MCF 10A (cell line): ENCODE measurements at regions of chr20 and their contacts with region 1.

Region 1: GRCh38 chr20:5529331-5530148 is 212.8 kb upstream of the PROKR2 start:
- DNase-seq: peak; percentile 85
- H3K4me3 Mint-ChIP-seq: no peak overlapping the region
- H3K27ac Mint-ChIP-seq: peak overlapping the region; percentile 23
- H3K4me1 Mint-ChIP-seq: peaks cover 34% of the 10 kb centered on the region
- H3K27me3 Mint-ChIP-seq: peaks cover 12% of the 10 kb centered on the region
- CTCF ChIP-seq: peak; percentile 71

Region 2: GRCh38 chr20:5543385-5543784 is 13.8 kb after region 1 on chr20:
- CTCF ChIA-PET with region 1: interaction called, 51 read pairs
- POLR2A ChIA-PET with region 1: interaction called, 8 read pairs
- intact Hi-C with region 1: no loop called
- DNase-seq: no peak
- H3K4me3 Mint-ChIP-seq: no peak overlapping the region
- H3K27ac Mint-ChIP-seq: no peak overlapping the region
- H3K4me1 Mint-ChIP-seq: no peaks in the 10 kb centered on the region
- H3K27me3 Mint-ChIP-seq: no peaks in the 10 kb centered on the region
- CTCF ChIP-seq: no peak

Region 3: GRCh38 chr20:5557123-5557522 is 27.6 kb after region 1 on chr20:
- CTCF ChIA-PET with region 1: interaction called, 28 read pairs
- POLR2A ChIA-PET with region 1: interaction called, 13 read pairs
- intact Hi-C with region 1: loop called (anchors 2 kb)
- DNase-seq: peak; percentile 56
- H3K4me3 Mint-ChIP-seq: no peak overlapping the region
- H3K27ac Mint-ChIP-seq: no peak overlapping the region
- H3K4me1 Mint-ChIP-seq: peaks cover 4% of the 10 kb centered on the region
- H3K27me3 Mint-ChIP-seq: no peaks in the 10 kb centered on the region
- CTCF ChIP-seq: peak; percentile 60

Region 4: DNA sequence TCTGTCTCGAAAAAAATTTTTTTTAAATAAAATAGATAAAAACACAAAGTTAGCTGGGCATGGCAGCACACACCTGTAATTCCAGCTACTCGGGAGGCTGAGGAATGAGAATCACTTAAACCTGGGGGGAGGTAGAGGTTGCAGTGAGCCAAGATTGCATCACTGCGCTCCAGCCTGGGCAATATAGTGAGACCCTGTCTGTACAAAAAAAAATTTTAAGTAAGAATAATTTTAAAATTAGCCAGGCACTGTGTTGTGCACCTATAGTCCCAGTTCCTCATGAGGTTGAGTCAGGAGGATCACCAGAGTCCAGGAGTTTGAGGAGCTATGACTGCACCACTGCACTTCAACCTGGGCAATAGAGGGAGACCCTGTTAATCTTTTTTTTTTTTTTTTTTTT is 71.4 kb after region 1 on chr20:
- CTCF ChIA-PET with region 1: interaction called, 10 read pairs
- POLR2A ChIA-PET with region 1: no interaction called
- intact Hi-C with region 1: no loop called
- DNase-seq: no peak
- H3K4me3 Mint-ChIP-seq: no peak overlapping the region
- H3K27ac Mint-ChIP-seq: no peak overlapping the region
- H3K4me1 Mint-ChIP-seq: peaks cover 28% of the 10 kb centered on the region
- H3K27me3 Mint-ChIP-seq: no peaks in the 10 kb centered on the region
- CTCF ChIP-seq: no peak

Region 5: DNA sequence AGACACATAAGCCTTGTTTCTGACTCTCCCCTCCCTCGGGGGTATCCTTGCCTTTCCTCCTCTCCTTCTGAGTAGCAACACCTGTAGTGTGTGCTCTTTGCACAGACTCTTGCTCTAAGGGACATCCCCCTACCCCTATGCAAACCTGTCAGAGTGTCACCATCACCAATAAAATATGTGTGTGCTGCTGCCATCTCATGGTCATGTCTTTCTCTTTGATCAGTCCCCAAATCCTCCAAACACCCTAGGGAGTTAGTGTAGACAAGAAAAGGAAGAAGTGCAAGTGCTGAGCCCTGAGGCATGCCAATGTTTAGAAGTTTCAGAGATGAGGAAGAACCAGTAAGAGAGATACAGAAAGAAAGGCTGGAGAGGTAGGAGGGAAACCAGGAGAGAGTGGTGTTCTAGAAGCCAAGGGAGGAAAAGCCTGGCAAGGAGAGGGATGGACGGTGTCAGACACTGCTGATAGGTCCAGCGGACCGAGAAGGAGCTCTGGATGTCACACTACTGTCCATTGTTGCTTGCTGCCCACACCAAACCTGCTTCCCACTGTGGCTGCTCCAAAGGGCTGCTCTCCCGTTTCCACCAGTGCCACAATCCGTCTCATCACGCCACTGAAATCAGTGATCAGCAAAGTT is 404.4 kb after region 1 on chr20:
- CTCF ChIA-PET with region 1: interaction called, 41 read pairs
- POLR2A ChIA-PET with region 1: interaction called, 6 read pairs
- intact Hi-C with region 1: loop called (anchors 1 kb)
- DNase-seq: peak; percentile 56
- H3K4me3 Mint-ChIP-seq: no peak overlapping the region
- H3K27ac Mint-ChIP-seq: no peak overlapping the region
- H3K4me1 Mint-ChIP-seq: peaks cover 5% of the 10 kb centered on the region
- H3K27me3 Mint-ChIP-seq: no peaks in the 10 kb centered on the region
- CTCF ChIP-seq: peak; percentile 42

Region 6: GRCh38 chr20:6008254-6008653 is 478.7 kb after region 1 on chr20:
- CTCF ChIA-PET with region 1: interaction called, 13 read pairs
- POLR2A ChIA-PET with region 1: interaction called, 21 read pairs
- intact Hi-C with region 1: loop called (anchors 1 kb)
- DNase-seq: peak; percentile 99
- H3K4me3 Mint-ChIP-seq: peak overlapping the region; percentile 76
- H3K27ac Mint-ChIP-seq: peak overlapping the region; percentile 83
- H3K4me1 Mint-ChIP-seq: peaks cover 21% of the 10 kb centered on the region
- H3K27me3 Mint-ChIP-seq: no peaks in the 10 kb centered on the region
- CTCF ChIP-seq: no peak